ENCODE measurements at regions of chr10 and their contacts with region 1.

Region 1: GRCh38 chr10:101602761-101603398 is 14.8 kb downstream of the DPCD start:
- DNase-seq: peak; percentile 90
- ATAC-seq: peak; percentile 98
- H3K4me3 Mint-ChIP-seq: no peak overlapping the region
- H3K27ac Mint-ChIP-seq: no peak overlapping the region
- H3K4me1 Mint-ChIP-seq: no peaks in the 10 kb centered on the region
- H3K27me3 Mint-ChIP-seq: no peaks in the 10 kb centered on the region

Region 2: GRCh38 chr10:101617102-101617823 is 14.4 kb after region 1 on chr10:
- CTCF ChIA-PET with region 1: interaction called, 12 read pairs
- POLR2A ChIA-PET with region 1: no interaction called
- intact Hi-C with region 1: no loop called
- DNase-seq: no peak
- ATAC-seq: no peak
- H3K4me3 Mint-ChIP-seq: no peak overlapping the region
- H3K27ac Mint-ChIP-seq: no peak overlapping the region
- H3K4me1 Mint-ChIP-seq: no peaks in the 10 kb centered on the region
- H3K27me3 Mint-ChIP-seq: no peaks in the 10 kb centered on the region

Region 3: DNA sequence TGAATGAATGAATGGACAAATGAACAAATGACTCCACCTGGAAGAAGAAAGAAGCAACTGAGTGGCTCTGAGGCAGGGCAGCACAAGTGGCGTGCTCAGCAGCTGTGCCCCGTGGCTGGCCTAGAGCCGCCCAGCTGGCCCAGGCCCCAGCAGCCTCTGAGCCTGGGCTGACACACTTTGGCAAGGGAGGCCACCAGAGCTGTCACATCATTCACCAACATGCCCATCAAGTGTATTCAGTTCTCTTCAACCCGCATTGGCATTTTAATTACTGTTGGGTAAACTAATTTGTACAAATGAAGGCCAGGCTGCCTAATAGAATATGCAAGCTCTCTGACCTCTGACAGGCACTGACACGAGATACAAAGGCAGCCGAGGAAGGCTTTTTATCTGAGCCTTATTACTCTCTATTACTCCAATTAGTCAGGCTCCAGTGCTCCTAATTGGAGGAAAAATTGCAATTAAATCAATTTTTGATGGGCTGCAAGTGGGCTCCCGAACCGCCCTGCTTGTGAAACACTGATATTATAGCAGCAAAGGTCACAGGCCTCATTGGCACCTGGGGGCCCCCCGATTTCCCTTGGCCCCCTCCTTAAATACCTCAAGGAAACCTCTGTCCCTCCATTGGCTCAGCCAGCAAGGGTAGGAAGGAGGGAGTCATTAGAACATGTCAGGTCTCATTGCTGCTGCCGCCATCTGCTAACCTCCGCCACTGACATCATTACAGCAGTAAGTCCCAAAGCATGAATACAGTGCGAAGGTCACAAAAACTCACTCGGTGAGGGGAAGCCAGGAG is 27.2 kb after region 1 on chr10:
- CTCF ChIA-PET with region 1: interaction called, 12 read pairs
- POLR2A ChIA-PET with region 1: no interaction called
- intact Hi-C with region 1: no loop called
- DNase-seq: no peak
- ATAC-seq: no peak
- H3K4me3 Mint-ChIP-seq: no peak overlapping the region
- H3K27ac Mint-ChIP-seq: no peak overlapping the region
- H3K4me1 Mint-ChIP-seq: peaks cover 5% of the 10 kb centered on the region
- H3K27me3 Mint-ChIP-seq: no peaks in the 10 kb centered on the region

Region 4: DNA sequence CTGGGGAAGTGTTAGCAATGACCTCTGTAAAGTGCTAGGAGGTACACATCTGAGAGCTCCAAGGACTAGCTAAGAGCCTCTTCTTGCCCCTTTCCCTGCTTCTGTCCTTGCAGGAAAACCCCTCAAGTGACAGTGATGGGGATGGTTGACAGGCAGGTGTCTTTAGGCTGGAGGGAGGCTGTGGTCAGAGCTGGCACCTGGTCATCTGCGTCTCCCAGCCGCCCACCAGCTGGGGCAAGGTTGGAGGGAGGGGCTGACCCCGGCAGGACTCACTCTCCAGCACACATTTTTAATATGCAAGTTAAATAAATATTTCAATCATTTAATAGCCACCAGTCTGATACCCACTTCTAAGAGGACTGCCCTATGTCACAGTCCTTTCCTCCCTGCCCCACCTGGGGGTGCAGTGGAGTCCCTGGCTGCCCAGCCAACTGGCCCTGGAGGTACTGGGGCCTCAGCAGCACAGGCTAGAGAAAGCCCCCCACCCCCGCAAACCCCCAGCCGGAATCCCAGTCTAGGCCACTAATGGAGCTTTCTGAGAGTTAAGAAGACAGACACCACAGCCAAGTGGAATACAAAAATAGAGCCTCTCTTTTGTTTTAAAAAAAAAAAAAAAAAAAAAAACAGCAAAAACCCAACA is 166.8 kb after region 1 on chr10:
- CTCF ChIA-PET with region 1: interaction called, 16 read pairs
- POLR2A ChIA-PET with region 1: no interaction called
- intact Hi-C with region 1: no loop called
- DNase-seq: no peak
- ATAC-seq: no peak
- H3K4me3 Mint-ChIP-seq: no peak overlapping the region
- H3K27ac Mint-ChIP-seq: no peak overlapping the region
- H3K4me1 Mint-ChIP-seq: peaks cover 5% of the 10 kb centered on the region
- H3K27me3 Mint-ChIP-seq: peaks cover 47% of the 10 kb centered on the region

Region 5: GRCh38 chr10:101774589-101775272 is 171.9 kb after region 1 on chr10:
- CTCF ChIA-PET with region 1: interaction called, 16 read pairs
- POLR2A ChIA-PET with region 1: no interaction called
- intact Hi-C with region 1: no loop called
- DNase-seq: peak; percentile 35
- ATAC-seq: peak; percentile 12
- H3K4me3 Mint-ChIP-seq: no peak overlapping the region
- H3K27ac Mint-ChIP-seq: no peak overlapping the region
- H3K4me1 Mint-ChIP-seq: peaks cover 24% of the 10 kb centered on the region
- H3K27me3 Mint-ChIP-seq: peaks cover 55% of the 10 kb centered on the region

Region 6: DNA sequence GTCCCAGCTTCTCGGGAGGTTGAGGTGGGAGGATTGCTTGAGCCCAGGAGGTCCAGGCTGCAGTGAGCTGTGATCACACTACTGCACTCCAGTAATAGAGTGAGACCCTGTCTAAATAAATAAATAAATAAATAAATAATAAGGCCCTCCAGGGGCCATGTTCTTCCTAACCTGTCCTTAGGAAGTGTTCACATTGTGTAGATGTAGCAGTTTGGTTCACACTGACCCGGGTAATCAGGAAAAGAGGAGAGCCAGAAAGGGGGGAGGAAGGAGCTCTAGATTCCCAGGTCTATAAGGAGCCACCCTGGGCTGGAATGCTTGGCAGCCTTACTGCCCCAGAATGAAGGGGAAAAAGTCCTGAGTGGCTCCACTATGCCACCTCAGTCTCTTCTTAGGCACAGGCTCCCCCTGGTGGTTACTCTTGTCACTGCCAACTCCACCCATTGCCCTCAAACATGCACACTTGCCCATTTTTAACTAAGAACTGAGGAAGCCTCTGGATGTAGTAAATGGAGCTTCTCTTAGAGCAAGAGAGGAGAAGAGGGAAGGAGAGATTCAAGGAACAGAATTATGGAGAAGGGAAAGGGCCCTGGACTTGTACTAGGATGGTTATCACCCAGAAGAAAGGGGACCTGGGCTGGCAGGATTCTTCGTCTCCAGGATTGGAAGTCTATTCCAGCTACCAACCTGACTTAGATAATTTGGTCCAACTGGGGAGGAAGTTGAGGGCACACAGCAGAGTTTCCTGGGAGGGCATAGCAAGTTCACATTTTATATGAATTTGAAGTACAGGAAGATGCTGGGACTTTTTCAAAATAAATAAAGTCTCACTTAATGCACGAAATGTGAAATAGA is 470.0 kb after region 1 on chr10:
- CTCF ChIA-PET with region 1: no interaction called
- POLR2A ChIA-PET with region 1: no interaction called
- intact Hi-C with region 1: loop called in 1 of 2 experiments (anchors 2 kb)
- DNase-seq: peak; percentile 89
- ATAC-seq: peak; percentile 97
- H3K4me3 Mint-ChIP-seq: no peak overlapping the region
- H3K27ac Mint-ChIP-seq: no peak overlapping the region
- H3K4me1 Mint-ChIP-seq: peaks cover 2% of the 10 kb centered on the region
- H3K27me3 Mint-ChIP-seq: no peaks in the 10 kb centered on the region